Sigmoid colon (tissue), 7 donors: ENCODE measurements at regions of chr1 and their contacts with region 1.

Region 1: DNA sequence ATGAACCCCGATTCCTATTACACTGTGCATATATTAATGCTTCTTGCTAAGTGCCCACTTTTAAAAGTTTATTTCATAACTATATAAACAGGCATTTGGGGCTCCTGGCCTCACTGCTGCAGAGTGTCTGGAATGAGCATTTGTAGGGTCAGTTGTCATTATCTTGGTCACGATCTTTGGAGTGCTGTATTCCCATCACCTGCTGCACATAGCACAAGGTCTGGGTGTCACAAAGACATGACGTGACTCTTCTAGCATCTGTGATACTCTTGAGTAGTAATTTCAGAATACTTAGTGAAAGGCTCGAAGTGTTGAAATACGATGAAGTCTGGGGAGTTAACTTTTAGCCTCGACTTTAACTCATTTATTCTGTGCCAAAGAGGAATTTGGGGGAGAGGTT is 186.4 kb downstream of the FMN2 start:
- DNase-seq: no peak
- H3K4me3 ChIP-seq: no peak overlapping the region
- H3K27ac ChIP-seq: peak overlapping the region in 1 of 4 donors; percentile 68
- H3K4me1 ChIP-seq: peaks cover 0 to 46% (median 10%) of the 10 kb centered on the region in 4 donors
- H3K27me3 ChIP-seq: no peaks in the 10 kb centered on the region
- CTCF ChIP-seq: no peak
- EP300 ChIP-seq: no peak
- POLR2A ChIP-seq: no peak

Region 2: GRCh38 chr1:239274242-239274830 is 1003.7 kb before region 1 on chr1:
- intact Hi-C with region 1: no loop called
- DNase-seq: no peak
- H3K4me3 ChIP-seq: no peak overlapping the region
- H3K27ac ChIP-seq: no peak overlapping the region
- H3K4me1 ChIP-seq: no peaks in the 10 kb centered on the region
- H3K27me3 ChIP-seq: no peaks in the 10 kb centered on the region
- CTCF ChIP-seq: no peak
- EP300 ChIP-seq: no peak
- POLR2A ChIP-seq: no peak

Region 3: DNA sequence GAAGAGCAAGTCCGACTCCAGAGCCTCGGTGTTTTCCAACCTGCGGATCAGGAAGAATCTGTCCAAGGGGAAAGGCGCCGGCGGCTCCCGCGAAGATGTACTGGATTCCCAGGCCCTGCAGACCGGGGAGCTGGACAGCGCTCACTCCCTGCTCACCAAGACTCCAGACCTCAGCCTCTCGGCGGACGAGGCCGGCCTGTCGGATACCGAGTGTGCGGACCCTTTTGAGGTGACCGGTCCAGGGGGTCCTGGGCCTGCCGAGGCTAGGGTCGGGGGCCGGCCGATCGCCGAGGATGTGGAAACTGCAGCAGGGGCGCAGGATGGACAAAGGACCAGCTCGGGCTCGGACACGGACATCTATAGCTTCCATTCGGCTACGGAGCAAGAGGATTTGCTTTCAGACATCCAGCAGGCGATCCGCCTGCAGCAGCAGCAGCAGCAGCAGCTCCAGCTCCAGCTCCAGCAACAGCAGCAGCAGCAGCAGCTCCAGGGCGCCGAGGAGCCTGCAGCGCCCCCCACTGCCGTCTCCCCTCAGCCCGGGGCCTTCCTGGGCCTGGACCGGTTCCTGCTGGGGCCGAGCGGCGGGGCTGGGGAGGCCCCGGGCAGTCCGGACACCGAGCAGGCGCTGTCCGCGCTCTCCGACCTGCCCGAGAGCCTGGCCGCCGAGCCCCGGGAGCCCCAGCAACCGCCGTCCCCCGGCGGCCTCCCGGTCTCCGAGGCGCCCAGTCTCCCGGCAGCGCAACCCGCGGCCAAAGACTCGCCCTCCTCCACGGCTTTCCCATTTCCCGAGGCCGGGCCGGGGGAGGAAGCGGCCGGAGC is 185.6 kb before region 1 on chr1:
- intact Hi-C with region 1: no loop called
- DNase-seq: peak; percentile 66
- H3K4me3 ChIP-seq: peak overlapping the region; percentile 54 to 77 (median 72)
- H3K27ac ChIP-seq: peak overlapping the region in 3 of 4 donors; percentile 82 to 92 (median 85)
- H3K4me1 ChIP-seq: peaks cover 0 to 33% (median 22%) of the 10 kb centered on the region in 4 donors
- H3K27me3 ChIP-seq: peaks cover 0 to 16% (median 0%) of the 10 kb centered on the region in 3 donors
- CTCF ChIP-seq: peak in 1 of 4 experiments; percentile 12
- EP300 ChIP-seq: no peak
- POLR2A ChIP-seq: no peak

Region 4: GRCh38 chr1:240242601-240243144 is 35.4 kb before region 1 on chr1:
- intact Hi-C with region 1: loop called (anchors 5 kb)
- DNase-seq: no peak
- H3K4me3 ChIP-seq: no peak overlapping the region
- H3K27ac ChIP-seq: no peak overlapping the region
- H3K4me1 ChIP-seq: peaks cover 0 to 40% (median 16%) of the 10 kb centered on the region in 4 donors
- H3K27me3 ChIP-seq: no peaks in the 10 kb centered on the region
- CTCF ChIP-seq: no peak
- EP300 ChIP-seq: no peak
- POLR2A ChIP-seq: no peak